Activated CD4-positive, alpha-beta memory T cell treated with anti-CD3 and anti-CD28 coated beads for 36 hours (primary cell): ENCODE measurements at regions of chr10 and their contacts with region 1.

Region 1: DNA sequence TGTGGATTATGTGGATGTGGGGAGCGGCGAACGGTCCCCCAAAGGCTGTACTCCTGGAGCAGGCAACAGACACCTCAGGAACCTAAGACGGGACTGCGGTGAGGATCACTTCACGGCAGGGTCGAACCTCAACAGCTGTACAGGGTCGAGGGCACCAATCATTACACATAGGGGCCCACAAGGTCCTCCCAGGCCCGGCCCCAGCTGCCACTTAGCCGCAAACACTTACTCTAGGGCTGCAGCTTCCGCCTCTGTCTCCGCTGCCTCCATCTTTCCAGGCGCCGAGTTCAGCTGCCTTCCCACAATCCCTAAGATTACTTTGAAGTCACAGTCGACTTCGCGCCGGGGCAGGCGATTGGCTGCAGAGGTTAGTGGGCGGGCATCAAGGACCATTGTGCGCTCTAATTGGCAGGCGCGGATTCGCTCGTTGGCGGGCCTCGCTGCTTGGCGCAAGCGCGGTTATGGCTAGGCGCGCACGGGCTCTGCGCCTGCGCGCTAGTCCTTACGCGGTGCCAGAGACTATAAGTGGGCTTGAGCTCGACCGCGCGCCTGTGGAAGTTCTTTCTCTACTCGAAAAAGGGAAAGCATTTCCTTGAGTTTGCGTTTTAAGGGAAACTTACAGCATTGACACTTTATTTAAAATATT is at the start of gene ZWINT:
- DNase-seq: peak; percentile 96
- H3K4me3 Mint-ChIP-seq: peak within 1 kb of the TSS; percentile 98
- H3K27ac Mint-ChIP-seq: peak within 1 kb of the TSS; percentile 85
- H3K4me1 Mint-ChIP-seq: peaks cover 42% of the 10 kb centered on the region
- H3K27me3 Mint-ChIP-seq: no peaks in the 10 kb centered on the region
- total RNA-seq, gene ZWINT: 69.2 to 72.7 TPM

Region 2: DNA sequence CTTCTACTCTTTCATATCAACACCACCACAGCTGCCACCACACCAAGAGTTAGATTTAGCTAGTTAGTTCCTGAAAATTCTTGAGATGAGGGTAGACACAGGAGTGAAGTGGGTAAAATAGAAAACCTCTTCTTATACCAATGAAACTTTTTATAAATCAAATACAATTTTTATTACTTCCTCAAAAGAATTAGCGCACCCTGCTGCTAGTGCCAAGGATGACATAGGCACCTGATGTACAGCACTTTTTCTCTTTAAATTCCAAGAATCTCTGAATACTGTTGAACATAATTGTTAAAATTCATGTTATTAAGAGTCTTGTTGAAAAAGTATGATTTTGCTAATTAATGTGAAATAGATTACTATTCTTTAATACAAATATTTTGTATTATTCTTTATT is 11.5 kb before region 1 on chr10:
- CTCF ChIA-PET with region 1: interaction called, 9 read pairs
- POLR2A ChIA-PET with region 1: interaction called, 4 read pairs
- intact Hi-C with region 1: loop called (anchors 1 kb)
- DNase-seq: no peak
- H3K4me3 Mint-ChIP-seq: no peak overlapping the region
- H3K27ac Mint-ChIP-seq: no peak overlapping the region
- H3K4me1 Mint-ChIP-seq: no peaks in the 10 kb centered on the region
- H3K27me3 Mint-ChIP-seq: no peaks in the 10 kb centered on the region